Activated CD4-positive, alpha-beta memory T cell treated with anti-CD3 and anti-CD28 coated beads, Interleukin-2, amount 10 ng/mL, durations not matched to agents 7 days and 5 days (primary cell): ENCODE measurements at regions of chr1 and their contacts with region 1.

Region 1: GRCh38 chr1:186420923-186421322 is 40.0 kb downstream of the PDC start:
- DNase-seq: no peak
- H3K4me3 Mint-ChIP-seq: peak overlapping the region; percentile 25
- H3K27ac Mint-ChIP-seq: peak overlapping the region; percentile 81
- H3K4me1 Mint-ChIP-seq: peaks cover 22% of the 10 kb centered on the region
- H3K27me3 Mint-ChIP-seq: no peaks in the 10 kb centered on the region

Region 2: DNA sequence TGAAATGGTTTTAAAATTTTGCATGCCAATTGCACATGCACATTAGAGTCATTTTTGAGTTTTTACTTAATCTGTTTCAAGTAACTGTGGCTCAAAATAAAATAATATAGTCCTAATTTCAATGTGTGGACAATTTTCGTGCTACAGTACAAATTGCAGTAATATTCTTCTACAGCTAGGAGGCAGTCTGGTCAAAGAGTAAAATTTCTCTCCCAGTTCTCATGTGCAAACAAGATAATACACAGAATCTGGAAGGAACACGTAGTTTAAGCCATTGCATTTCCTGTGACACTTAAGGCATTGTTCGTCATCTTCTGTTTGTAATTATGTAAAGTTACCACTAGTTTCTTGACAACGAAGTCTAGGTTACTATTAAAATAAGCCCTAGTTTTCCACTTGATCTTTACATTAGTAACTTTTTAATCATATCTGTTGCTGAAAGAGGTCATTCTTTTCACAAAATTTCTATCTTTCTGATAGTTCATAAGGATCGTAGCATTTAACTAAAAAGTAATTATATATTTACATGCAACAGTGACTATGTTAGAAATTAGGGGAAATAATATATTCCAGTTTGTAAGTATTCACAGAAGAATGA is 16.4 kb before region 1 on chr1:
- CTCF ChIA-PET with region 1: interaction called, 11 read pairs
- POLR2A ChIA-PET with region 1: interaction called, 9 read pairs
- DNase-seq: no peak
- H3K4me3 Mint-ChIP-seq: no peak overlapping the region
- H3K27ac Mint-ChIP-seq: peak overlapping the region; percentile 21
- H3K4me1 Mint-ChIP-seq: peaks cover 5% of the 10 kb centered on the region
- H3K27me3 Mint-ChIP-seq: no peaks in the 10 kb centered on the region